Ascending aorta (tissue), 2 donors: ENCODE measurements at regions of chr11 and their contacts with region 1.

Region 1: DNA sequence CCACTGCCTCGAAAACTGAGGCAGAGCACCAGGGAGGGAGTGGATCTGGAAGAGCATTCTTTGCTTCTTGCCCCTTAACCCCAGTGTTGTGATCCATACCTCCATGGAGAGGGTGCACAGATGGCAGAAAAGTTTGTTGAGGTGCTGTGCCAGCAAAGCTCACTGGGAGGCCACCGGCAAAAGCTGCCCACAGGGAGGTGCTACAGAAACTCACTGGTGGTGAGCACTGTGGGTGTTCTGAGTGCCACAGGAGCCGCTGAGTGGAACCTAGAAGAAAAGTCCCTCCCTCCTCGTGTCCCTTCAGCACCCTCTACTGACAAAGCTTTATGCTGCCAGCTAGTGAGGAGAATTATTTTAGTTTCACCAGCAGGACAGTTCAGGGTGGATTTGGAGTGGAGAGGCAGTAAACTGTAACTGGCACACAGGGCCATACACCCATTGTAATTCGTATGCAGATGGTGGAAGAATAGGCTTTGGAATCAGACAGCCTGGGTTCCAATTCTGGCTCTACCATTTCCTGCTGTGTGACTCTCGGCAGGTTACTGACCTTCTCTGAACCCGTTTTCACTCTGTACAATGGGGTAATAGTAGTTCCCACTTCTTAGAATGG is 84.6 kb downstream of the SWAP70 start:
- DNase-seq: peak in 1 of 2 donors; percentile 80
- H3K4me3 ChIP-seq: no peak overlapping the region
- H3K27ac ChIP-seq: peak overlapping the region; percentile 15 to 31
- H3K4me1 ChIP-seq: peaks cover 3 to 8% of the 10 kb centered on the region in 2 donors
- H3K27me3 ChIP-seq: no peaks in the 10 kb centered on the region
- CTCF ChIP-seq: peak; percentile 76 to 88 (median 80)

Region 2: DNA sequence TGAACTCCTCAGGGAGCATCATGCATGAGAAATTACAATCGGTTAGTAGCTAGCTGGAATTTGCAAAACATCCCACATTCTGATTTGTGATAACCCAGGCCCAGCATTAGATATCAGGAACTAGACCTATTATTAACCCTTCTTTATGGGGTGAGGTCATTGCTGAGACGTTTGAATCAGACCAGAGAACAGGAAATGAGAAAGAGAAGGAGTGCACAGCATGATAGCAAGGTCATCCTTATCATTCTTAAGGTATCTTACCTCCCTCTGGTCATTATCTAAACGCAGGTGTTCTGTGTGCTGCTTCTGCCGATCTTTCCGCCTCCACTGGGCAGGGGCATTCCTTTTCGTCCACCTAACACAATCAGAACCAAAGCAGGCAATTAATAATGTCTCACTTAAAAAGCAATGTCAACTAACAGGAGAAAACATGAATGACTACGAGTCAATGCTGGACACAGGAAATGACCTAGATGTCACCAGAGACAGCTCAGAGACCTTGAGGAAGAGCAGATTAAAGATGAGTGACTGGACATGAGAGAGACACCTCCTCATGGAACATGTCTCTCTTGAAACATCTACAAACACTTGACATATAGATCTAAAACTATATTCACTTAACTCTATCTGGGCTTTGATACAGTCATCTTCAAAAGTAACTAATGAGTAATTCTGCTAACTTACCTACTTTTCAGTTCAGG is 578.7 kb before region 1 on chr11:
- intact Hi-C with region 1: loop called (anchors 5 kb)
- DNase-seq: no peak
- H3K4me3 ChIP-seq: no peak overlapping the region
- H3K27ac ChIP-seq: no peak overlapping the region
- H3K4me1 ChIP-seq: no peaks in the 10 kb centered on the region
- H3K27me3 ChIP-seq: no peaks in the 10 kb centered on the region
- CTCF ChIP-seq: no peak

Region 3: GRCh38 chr11:9534791-9535781 is 213.4 kb before region 1 on chr11:
- intact Hi-C with region 1: loop called (anchors 5 kb)
- DNase-seq: peak; percentile 19 to 89
- H3K4me3 ChIP-seq: no peak overlapping the region
- H3K27ac ChIP-seq: peak overlapping the region; percentile 50 to 65
- H3K4me1 ChIP-seq: peaks cover 0 to 22% of the 10 kb centered on the region in 2 donors
- H3K27me3 ChIP-seq: no peaks in the 10 kb centered on the region
- CTCF ChIP-seq: peak; percentile 55 to 64 (median 57)

Region 4: DNA sequence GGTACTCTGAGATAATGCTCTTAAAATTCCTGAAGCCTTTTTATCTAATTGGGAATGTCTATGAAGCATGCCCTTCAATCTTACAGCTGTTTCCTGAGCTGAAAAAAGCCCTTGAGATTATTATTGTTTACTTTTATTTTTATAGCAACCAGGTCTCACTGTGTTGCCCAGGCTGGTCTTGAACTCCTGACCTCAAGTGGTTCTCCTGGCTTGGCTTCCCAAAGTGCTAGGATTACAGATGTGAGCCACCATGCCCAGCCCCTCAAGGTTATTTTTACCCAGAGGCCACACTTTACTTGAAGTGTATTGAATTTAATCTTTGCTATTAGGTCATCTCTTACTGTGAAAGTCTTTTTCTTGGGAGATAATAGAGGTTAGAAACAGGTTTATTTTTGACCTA is 91.6 kb before region 1 on chr11:
- intact Hi-C with region 1: loop called (anchors 5 kb)
- DNase-seq: no peak
- H3K4me3 ChIP-seq: no peak overlapping the region
- H3K27ac ChIP-seq: peak overlapping the region in 1 of 2 donors; percentile 50
- H3K4me1 ChIP-seq: no peaks in the 10 kb centered on the region
- H3K27me3 ChIP-seq: no peaks in the 10 kb centered on the region
- CTCF ChIP-seq: no peak